ENCODE measurements at regions of chr17 and their contacts with region 1.

Region 1: DNA sequence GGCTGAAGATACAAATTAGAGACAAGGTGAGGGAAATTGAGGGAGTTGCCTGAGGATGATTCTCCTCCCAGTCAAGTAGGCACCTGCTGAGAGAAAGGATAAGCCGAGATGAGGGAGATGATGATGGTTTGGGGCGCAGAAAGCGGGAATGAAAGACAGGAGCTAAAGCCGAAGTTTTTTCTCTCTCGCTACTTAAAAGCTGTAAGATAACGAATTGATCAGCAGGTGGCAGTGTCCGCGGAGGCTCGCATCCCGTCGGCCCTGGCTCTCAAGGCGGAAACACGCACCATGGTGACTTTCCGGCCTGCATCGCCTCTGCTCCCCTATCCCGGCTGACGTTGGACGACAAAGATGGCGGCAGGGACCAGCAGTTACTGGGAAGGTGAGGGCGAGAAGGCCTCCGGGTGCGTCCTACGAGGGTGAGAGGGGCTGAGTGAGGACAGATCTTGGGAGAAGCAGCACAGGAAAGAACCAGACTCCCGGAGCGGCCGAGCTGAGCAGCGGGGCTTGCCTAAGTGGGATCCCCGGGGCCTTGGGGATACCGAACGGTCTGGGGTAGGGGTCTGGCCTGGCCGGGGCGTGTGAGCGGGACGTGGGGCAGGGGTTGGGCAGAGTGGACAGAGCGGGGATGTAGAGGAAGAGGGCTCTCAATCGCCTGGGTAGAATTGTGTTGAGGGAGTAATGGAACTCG is at the start of gene GOSR1:
- DNase-seq: peak; percentile 91 to 93
- ATAC-seq: peak; percentile 99 to 100
- H3K4me3 ChIP-seq: peak within 1 kb of the TSS; percentile 74 to 99 (median 88)
- H3K27ac ChIP-seq: peak within 1 kb of the TSS; percentile 89 to 97 (median 94)
- H3K4me1 ChIP-seq: peaks cover 18 to 19% of the 10 kb centered on the region in 2 donors
- H3K27me3 ChIP-seq: no peaks in the 10 kb centered on the region
- CTCF ChIP-seq: peak; percentile 54 to 83 (median 69)
- POLR2A ChIP-seq: peak; percentile 36 to 40
- total RNA-seq, gene GOSR1: 22.7 to 29.1 (median 25.8) TPM

Region 2: GRCh38 chr17:30378824-30379302 is 98.4 kb before region 1 on chr17 and contains the start of gene CPD:
- in situ Hi-C with region 1: no loop called
- intact Hi-C with region 1: loop called (anchors 2 kb)
- DNase-seq: peak; percentile 95 to 96
- ATAC-seq: peak; percentile 92 to 95
- H3K4me3 ChIP-seq: peak within 1 kb of the TSS; percentile 83 to 95 (median 90)
- H3K27ac ChIP-seq: peak within 1 kb of the TSS; percentile 86 to 93 (median 92)
- H3K4me1 ChIP-seq: peaks cover 37 to 43% of the 10 kb centered on the region in 2 donors
- H3K27me3 ChIP-seq: no peaks in the 10 kb centered on the region
- CTCF ChIP-seq: no peak
- POLR2A ChIP-seq: peak; percentile 89 to 93
- total RNA-seq, gene CPD: 20.8 to 32.4 (median 28.0) TPM

Region 3: GRCh38 chr17:30600049-30600829 is 123.0 kb after region 1 on chr17:
- in situ Hi-C with region 1: no loop called
- intact Hi-C with region 1: loop called (anchors 10 kb)
- DNase-seq: peak; percentile 40 to 66
- ATAC-seq: peak; percentile 91 to 94
- H3K4me3 ChIP-seq: peak overlapping the region; percentile 77 to 95 (median 84)
- H3K27ac ChIP-seq: peak overlapping the region; percentile 89 to 96 (median 94)
- H3K4me1 ChIP-seq: peaks cover 7 to 11% of the 10 kb centered on the region in 2 donors
- H3K27me3 ChIP-seq: no peaks in the 10 kb centered on the region
- CTCF ChIP-seq: peak in 4 of 5 experiments; percentile 47 to 64 (median 54)
- POLR2A ChIP-seq: peak; percentile 74

Region 4: DNA sequence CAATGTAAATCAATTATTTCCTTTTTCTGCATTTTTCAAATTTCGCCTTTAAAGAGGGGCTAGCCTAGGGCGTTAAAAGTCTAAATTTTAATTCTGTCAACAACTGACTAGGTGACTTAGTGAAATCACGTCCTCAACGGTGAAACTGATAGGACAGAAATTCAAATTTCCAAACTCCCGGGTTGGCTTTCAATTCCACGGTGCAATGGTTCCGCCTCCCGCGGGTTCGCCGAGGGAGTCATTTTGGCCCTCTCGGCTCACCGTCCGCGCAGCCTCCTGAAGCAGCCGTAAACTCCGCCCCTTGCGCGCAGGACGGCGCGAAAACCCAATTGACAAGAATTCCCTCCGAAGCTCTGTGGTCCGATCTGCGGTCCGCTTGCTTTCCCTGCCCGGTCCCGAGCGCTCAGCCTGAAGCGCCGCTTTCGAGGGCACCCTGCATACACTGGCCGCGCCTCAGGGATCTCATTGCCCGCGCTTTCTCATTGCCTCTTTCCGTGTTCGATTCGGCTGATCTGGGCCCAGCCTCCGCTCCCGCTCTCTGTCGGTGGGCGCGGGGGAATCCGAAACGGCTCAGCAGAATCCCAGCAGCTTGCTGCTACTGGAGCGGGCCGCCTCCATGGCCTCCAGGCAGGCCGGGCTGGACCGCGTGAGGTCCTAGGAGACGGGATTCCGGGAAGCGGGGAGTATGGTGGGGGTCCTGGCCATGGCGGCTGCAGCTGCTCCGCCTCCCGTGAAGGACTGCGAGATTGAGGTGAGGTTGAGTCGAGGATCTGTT is 354.6 kb after region 1 on chr17 and contains the start of gene ATAD5:
- in situ Hi-C with region 1: no loop called
- intact Hi-C with region 1: loop called (anchors 5 kb)
- DNase-seq: peak; percentile 84 to 85
- ATAC-seq: peak; percentile 93 to 98
- H3K4me3 ChIP-seq: peak within 1 kb of the TSS; percentile 79 to 88 (median 82)
- H3K27ac ChIP-seq: peak within 1 kb of the TSS; percentile 62 to 73 (median 67)
- H3K4me1 ChIP-seq: peaks cover 14 to 15% of the 10 kb centered on the region in 2 donors
- H3K27me3 ChIP-seq: no peaks in the 10 kb centered on the region
- CTCF ChIP-seq: no peak
- POLR2A ChIP-seq: no peak
- total RNA-seq, gene ATAD5: 0.10 to 0.39 (median 0.20) TPM

Region 5: GRCh38 chr17:32142038-32142856 is 1665.0 kb after region 1 on chr17 and contains the start of gene RHOT1:
- in situ Hi-C with region 1: no loop called
- intact Hi-C with region 1: loop called (anchors 5 kb)
- DNase-seq: peak; percentile 47 to 69
- ATAC-seq: peak; percentile 75 to 76
- H3K4me3 ChIP-seq: peak within 1 kb of the TSS; percentile 71 to 96 (median 88)
- H3K27ac ChIP-seq: peak within 1 kb of the TSS; percentile 89 to 98 (median 92)
- H3K4me1 ChIP-seq: peaks cover 20 to 27% of the 10 kb centered on the region in 2 donors
- H3K27me3 ChIP-seq: no peaks in the 10 kb centered on the region
- CTCF ChIP-seq: peak; percentile 70 to 81 (median 75)
- POLR2A ChIP-seq: peak; percentile 65 to 70
- total RNA-seq, gene RHOT1: 30.8 to 67.5 (median 36.2) TPM